Heart left ventricle (tissue), 16 donors: ENCODE measurements at regions of chr19 and their contacts with region 1.

Region 1: GRCh38 chr19:9538183-9539058 is at the start of gene ZNF426:
- DNase-seq: peak; percentile 89 to 93 (median 91)
- ATAC-seq: peak; percentile 94 to 99 (median 98)
- H3K4me3 ChIP-seq: peak within 1 kb of the TSS; percentile 45 to 99 (median 76)
- H3K27ac ChIP-seq: peak within 1 kb of the TSS; percentile 87 to 97 (median 96)
- H3K4me1 ChIP-seq: peaks cover 0 to 18% (median 12%) of the 10 kb centered on the region in 12 donors
- H3K27me3 ChIP-seq: no peaks in the 10 kb centered on the region
- CTCF ChIP-seq: peak in 1 of 12 donors; percentile 8
- POLR2A ChIP-seq: peak in 1 of 2 donors; percentile 39
- total RNA-seq, gene ZNF426: 10.1 to 21.9 (median 14.3) TPM

Region 2: GRCh38 chr19:9323919-9324583 is 214.4 kb before region 1 on chr19 and contains the start of gene ZNF559:
- intact Hi-C with region 1: loop called in 2 of 10 experiments (anchors 5 to 10 kb)
- DNase-seq: peak; percentile 93 to 97 (median 94)
- ATAC-seq: peak; percentile 97 to 99 (median 98)
- H3K4me3 ChIP-seq: peak within 1 kb of the TSS; percentile 51 to 96 (median 72)
- H3K27ac ChIP-seq: peak within 1 kb of the TSS; percentile 69 to 93 (median 88)
- H3K4me1 ChIP-seq: peaks cover 0 to 17% (median 6%) of the 10 kb centered on the region in 12 donors
- H3K27me3 ChIP-seq: no peaks in the 10 kb centered on the region
- CTCF ChIP-seq: peak in 8 of 12 donors; percentile 4 to 44 (median 29)
- POLR2A ChIP-seq: peak in 1 of 2 donors; percentile 67
- total RNA-seq, gene ZNF559: 12.3 to 19.1 (median 15.1) TPM

Region 3: DNA sequence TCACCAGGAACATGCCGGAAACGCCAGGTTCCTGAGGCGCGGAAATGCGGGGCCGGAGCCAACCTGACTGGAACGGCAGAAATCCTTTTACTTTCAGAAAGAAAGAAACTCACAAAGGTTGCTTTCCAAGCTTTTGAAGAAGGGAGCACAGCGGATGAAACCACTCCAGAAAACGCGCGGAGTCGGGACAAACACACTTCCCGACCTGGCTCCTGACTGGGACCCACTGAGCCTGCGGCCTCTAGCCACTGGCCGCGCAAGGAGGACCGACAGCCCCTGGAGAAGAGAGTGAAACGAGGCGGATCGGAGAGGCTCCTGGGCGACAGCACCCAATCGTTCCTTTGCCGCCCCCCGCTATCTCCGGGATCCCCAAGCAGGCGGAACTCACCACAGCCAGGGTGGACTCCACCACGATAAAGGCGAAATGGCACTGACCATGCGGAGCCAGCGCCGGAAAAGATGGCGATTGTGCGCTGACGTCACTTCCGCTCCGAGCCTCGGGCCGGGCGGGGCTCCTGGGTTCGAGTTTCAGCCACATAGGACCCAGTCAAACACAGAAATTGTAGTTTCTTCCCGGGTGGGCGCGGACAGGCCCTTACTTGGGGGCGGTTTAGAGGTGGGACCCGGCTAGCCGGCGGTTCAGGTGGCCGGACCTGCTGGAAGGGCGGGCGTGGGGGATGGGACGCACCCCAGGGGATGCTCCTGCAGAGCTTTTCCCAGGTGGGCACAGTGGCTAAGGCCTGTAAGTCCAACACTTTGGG is 45.8 kb after region 1 on chr19 and contains the start of gene ZNF121:
- intact Hi-C with region 1: loop called in 2 of 10 experiments (anchors 5 to 10 kb)
- DNase-seq: peak; percentile 87 to 92 (median 90)
- ATAC-seq: peak; percentile 93 to 98 (median 97)
- H3K4me3 ChIP-seq: peak within 1 kb of the TSS; percentile 53 to 98 (median 87)
- H3K27ac ChIP-seq: peak within 1 kb of the TSS; percentile 69 to 95 (median 91)
- H3K4me1 ChIP-seq: peaks cover 0 to 30% (median 19%) of the 10 kb centered on the region in 12 donors
- H3K27me3 ChIP-seq: peaks cover 0 to 14% (median 0%) of the 10 kb centered on the region in 9 donors
- CTCF ChIP-seq: peak in 2 of 12 donors; percentile 10 to 13
- POLR2A ChIP-seq: peak in 1 of 2 donors; percentile 38
- total RNA-seq, gene ZNF121: 15.6 to 25.4 (median 19.1) TPM

Region 4: GRCh38 chr19:9621156-9622037 is 83.0 kb after region 1 on chr19 and contains the start of gene ZNF561:
- intact Hi-C with region 1: loop called in 1 of 10 experiments (anchors 2 kb)
- DNase-seq: peak; percentile 85 to 93 (median 90)
- ATAC-seq: peak; percentile 93 to 96 (median 95)
- H3K4me3 ChIP-seq: peak within 1 kb of the TSS; percentile 60 to 97 (median 76)
- H3K27ac ChIP-seq: peak within 1 kb of the TSS; percentile 79 to 97 (median 93)
- H3K4me1 ChIP-seq: peaks cover 4 to 30% (median 18%) of the 10 kb centered on the region in 12 donors
- H3K27me3 ChIP-seq: no peaks in the 10 kb centered on the region
- CTCF ChIP-seq: no peak
- POLR2A ChIP-seq: no peak
- total RNA-seq, gene ZNF561: 12.2 to 30.0 (median 20.8) TPM

Region 5: GRCh38 chr19:9768175-9769112 is 230.0 kb after region 1 on chr19 and contains the start of gene ZNF846:
- intact Hi-C with region 1: loop called in 1 of 10 experiments (anchors 1 kb)
- DNase-seq: peak; percentile 92 to 96 (median 95)
- ATAC-seq: peak; percentile 97 to 100 (median 99)
- H3K4me3 ChIP-seq: peak within 1 kb of the TSS; percentile 57 to 91 (median 78)
- H3K27ac ChIP-seq: peak within 1 kb of the TSS; percentile 89 to 98 (median 92)
- H3K4me1 ChIP-seq: peaks cover 0 to 20% (median 15%) of the 10 kb centered on the region in 12 donors
- H3K27me3 ChIP-seq: no peaks in the 10 kb centered on the region
- CTCF ChIP-seq: no peak
- POLR2A ChIP-seq: peak in 1 of 2 donors; percentile 62
- total RNA-seq, gene ZNF846: 6.5 to 11.0 (median 8.4) TPM

Region 6: DNA sequence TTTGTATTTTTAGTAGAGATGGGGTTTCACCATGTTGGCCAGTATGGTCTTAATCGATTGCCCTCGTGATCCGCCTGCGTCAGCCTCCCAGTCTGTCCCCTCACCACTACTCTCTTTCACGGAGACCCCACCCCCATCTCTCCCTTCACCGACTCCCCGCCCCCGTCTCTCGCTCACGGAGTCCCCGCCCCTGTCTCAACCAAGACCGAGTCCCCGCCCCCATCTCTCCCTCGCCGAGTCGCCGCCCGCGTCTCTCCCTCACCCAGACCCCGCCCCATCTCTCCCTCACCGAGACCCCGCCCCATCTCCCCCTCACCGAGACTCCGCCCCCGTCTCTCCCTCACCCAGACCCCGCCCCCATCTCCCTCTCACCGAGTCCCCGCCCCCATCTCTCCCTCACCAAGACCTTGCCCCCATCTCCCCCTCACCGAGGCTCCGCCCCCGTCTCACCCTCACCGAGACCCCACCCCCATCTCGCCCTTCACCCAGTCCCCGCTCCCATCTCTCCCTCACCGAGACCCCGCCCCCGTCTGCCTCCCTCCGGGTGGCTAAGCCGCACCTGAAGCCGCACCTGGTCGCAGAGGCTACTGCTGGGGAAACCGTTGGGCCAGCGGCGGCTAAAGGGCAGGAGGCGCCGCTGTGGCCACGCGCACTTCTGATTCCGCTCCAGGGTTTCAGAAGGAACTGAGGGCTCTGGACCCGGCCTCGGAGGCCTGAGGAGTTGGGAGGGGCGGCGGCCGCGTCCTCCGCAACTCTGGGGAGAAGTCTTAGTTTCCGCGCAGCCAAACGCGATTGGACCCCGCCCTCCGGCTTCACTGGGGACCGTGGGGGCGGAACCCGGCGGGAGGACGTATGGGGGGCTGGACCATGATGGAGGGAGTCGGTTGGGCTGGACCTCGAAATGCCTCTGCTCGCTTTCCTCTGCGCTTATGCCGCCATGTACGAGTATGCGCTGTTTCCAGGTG is 247.2 kb after region 1 on chr19:
- intact Hi-C with region 1: loop called in 1 of 10 experiments (anchors 5 kb)
- DNase-seq: peak; percentile 98 to 99 (median 98)
- ATAC-seq: peak; percentile 92 to 96 (median 94)
- H3K4me3 ChIP-seq: peak overlapping the region; percentile 42 to 92 (median 66)
- H3K27ac ChIP-seq: peak overlapping the region; percentile 52 to 100 (median 96)
- H3K4me1 ChIP-seq: peaks cover 0 to 26% (median 11%) of the 10 kb centered on the region in 12 donors
- H3K27me3 ChIP-seq: no peaks in the 10 kb centered on the region
- CTCF ChIP-seq: no peak
- POLR2A ChIP-seq: peak in 1 of 2 donors; percentile 87